ENCODE measurements at regions of chr9 and their contacts with region 1.

Region 1: DNA sequence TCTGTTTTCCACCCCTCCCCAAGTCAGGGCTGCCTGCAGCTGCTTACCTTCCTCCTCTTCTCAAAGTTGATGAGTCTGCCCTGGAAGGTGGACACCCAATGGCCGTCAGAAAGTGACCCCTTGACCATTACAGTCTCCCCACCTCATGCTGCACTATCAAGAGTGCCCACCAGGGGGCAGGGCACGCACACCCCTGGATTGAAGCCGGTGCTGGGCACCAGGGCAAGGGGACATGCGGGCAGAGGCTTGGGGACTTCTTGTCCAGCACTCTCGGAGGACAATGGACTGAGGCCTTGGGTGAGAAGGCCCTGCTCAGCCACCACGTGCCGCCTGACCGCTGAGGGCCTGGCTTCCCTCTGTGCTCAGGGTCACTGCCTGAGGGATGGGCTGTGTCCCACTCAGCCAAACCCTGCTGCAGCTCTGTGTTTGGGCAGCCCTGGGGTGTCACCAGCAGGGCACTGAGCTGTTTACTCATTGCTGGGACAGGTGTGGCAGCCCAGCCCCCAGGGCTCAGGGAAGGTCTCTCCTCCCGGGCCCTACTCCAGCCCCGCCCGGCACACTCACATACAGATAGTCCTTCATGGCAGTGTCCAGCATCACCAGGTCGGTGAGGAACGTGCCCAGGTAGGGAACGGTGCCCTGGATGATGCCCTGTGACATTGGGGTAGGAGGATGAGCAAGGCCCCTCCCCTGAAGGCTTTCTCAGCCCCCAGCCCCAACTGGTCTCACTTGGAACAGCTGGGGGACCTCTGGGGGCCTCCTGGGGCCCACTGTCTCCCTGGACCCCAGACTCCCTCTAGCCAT is 17.7 kb downstream of the RALGDS start:
- DNase-seq: peak; percentile 89

Region 2: DNA sequence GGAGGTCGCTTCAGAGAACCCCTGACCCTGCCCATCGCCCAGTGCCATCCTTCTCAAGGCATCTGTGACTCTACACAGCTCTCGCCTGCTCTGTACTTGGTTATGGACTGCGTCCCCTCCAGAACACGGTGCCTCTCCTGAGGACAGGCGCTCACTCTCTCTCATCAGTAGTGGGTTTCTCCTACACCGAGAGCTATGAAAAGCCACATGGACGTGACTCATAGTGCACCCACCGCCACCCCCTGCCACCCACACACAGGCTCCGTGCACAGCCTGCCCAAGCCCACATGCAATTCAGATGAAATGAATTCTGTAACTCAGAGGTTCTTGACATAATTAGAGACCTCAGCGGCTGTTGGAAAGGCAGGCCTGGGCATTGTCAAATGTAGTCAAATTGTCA is 58.7 kb before region 1 on chr9:
- intact Hi-C with region 1: loop called (anchors 5 kb)
- DNase-seq: no peak

Measured in cardiac septum (tissue), 1 donor.